ENCODE measurements at regions of chr20 and their contacts with region 1.

Region 1: DNA sequence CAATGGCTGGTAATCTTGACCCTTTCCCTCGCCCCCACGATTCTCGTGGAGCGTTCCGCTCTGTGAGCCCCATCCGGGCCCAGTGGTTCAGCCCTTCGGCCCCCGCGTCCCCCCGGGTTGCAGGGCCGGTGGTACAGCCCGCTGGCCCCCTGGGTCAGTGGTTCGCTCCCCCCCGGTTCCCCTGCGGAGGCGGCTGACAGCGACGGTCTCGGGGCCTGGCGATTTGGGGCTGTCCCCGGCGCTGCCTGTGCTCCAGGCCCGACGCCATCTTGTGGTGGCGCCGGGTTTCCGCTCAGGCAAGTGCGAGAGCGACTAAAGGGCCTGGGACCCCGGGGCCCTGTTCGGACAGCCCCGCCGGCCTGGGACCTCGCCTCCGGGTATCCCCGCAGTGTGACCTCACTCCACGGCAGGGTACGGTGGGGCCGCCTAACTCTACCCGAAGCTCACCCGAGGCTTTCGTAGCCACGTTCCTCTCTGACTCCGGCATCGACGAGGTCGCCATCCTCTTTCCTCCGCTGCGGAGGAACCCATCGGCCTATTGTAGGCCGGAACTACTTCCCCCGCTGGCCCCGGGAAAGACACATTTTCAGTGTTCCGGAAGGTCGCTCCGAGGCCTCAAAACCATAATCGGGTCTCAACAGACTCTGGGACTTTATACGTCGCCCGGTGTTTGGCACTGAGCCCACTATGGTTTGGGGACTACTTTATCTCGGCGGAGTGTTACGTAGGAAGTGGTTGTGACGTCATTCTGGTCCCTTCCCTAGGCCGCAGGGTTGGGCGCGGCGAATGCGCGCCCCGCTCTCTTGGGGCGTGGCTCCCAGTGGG is at the start of gene ZNF335:
- DNase-seq: peak; percentile 94
- H3K4me3 Mint-ChIP-seq: peak within 1 kb of the TSS; percentile 89
- H3K27ac Mint-ChIP-seq: peak within 1 kb of the TSS; percentile 100
- H3K4me1 Mint-ChIP-seq: peaks cover 23% of the 10 kb centered on the region
- H3K27me3 Mint-ChIP-seq: no peaks in the 10 kb centered on the region
- total RNA-seq, gene ZNF335: 38.3 and 40.9 TPM in 2 replicates

Region 2: DNA sequence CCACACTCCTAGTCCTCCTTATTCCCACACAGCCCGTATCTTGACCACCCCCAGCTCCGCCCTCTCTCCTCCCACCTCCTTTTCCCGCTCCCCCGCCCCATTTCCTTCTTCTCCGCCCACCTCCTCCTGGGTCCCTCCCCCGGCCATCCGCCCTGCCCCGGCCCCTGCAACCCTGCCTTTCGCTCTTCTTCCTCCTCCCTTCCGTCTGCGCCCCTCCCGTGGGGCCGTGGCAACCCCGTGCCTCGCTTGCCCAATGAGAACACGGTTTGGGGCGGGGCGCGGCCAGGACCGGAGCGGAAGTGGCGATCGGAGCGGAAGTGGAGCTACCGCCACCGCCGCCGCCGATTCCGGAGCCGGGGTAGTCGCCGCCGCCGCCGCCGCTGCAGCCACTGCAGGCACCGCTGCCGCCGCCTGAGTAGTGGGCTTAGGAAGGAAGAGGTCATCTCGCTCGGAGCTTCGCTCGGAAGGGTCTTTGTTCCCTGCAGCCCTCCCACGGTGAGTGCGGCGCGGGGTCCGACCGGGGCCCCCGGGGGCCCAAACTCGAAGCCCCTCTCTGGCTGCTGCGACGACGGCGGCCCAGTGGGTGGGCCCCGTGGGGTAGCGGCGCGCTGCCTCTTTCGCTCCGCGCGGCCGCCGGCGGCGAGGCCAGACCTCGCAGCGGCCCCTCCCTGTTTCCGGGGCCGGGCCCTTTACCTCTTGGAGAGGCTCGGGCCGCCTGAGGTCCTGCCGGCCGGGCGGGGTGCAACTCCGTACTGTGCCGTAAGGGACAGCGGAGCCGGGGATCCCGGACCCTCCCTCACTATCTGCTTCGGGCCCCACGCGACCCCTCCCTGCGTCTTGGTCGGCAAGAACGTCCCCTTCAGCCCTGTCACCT is 1086.3 kb before region 1 on chr20 and contains the start of gene YWHAB:
- intact Hi-C with region 1: loop called (anchors 5 kb)
- DNase-seq: peak; percentile 97
- H3K4me3 Mint-ChIP-seq: peak within 1 kb of the TSS; percentile 95
- H3K27ac Mint-ChIP-seq: peak within 1 kb of the TSS; percentile 94
- H3K4me1 Mint-ChIP-seq: peaks cover 54% of the 10 kb centered on the region
- H3K27me3 Mint-ChIP-seq: no peaks in the 10 kb centered on the region
- total RNA-seq, gene YWHAB: 230 and 246 TPM in 2 replicates

Region 3: DNA sequence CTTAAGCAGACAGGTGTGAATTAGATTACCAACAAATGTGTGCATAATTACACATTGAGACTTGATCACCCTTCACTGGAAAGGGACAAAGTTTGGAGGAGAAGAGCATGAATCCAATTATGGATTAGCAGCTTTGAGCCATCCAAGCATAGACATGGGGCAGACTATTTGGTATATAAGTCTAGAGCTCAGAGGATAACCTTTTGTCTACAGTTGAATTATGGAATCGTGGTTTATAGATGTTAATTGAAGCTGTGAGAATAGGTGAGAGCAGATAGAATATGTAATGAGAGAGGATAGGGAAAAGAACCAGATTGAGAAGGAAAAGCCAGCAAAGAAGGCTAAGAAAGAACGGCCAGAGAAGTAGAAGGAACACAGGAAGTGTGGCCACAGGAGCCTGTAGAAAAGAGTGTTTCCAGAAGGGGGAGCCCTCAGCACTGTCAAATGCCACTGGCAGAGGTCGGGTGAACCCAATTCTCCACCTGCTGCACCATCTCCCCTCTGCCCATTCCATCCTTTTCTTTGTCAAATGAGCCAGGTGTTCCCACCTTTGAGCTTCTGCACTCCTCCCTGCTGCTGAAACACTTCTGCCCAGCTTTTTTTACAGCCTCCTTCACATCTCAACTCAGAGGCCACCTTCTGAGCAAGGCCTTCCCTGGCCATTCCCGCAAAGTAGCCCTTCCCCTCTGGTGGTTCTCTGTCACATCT is 172.8 kb before region 1 on chr20:
- intact Hi-C with region 1: loop called (anchors 2 kb)
- DNase-seq: peak; percentile 64
- H3K4me3 Mint-ChIP-seq: no peak overlapping the region
- H3K27ac Mint-ChIP-seq: peak overlapping the region; percentile 4
- H3K4me1 Mint-ChIP-seq: peaks cover 20% of the 10 kb centered on the region
- H3K27me3 Mint-ChIP-seq: no peaks in the 10 kb centered on the region

Region 4: DNA sequence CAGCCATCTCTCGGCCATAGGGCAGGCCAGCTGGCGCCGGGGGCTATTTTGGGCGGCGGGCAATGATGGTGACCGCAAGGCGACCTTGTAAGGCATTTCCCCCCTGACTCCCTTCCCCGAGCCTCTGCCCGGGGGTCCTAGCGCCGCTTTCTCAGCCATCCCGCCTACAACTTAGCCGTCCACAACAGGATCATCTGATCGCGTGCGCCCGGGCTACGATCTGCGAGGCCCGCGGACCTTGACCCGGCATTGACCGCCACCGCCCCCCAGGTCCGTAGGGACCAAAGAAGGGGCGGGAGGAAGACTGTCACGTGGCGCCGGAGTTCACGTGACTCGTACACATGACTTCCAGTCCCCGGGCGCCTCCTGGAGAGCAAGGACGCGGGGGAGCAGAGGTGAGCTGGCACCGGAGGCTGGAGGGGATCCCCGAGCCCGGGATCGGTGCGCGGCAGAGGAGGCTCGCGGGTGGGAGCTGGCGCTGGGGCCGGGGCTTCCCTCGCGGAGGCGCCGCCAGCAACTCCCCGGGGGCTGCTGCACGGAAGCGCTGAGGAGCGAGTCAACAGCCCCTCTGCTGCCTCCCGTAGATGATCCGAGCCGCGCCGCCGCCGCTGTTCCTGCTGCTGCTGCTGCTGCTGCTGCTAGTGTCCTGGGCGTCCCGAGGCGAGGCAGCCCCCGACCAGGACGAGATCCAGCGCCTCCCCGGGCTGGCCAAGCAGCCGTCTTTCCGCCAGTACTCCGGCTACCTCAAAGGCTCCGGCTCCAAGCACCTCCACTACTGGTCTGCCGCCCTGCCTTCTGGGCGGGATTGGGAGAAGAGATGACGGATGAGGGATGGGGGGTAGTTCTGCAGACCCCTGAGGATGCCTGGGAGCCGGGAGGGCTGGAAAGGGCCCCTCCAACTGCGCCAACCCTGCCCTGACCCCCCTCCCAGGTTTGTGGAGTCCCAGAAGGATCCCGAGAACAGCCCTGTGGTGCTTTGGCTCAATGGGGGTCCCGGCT is 80.6 kb before region 1 on chr20 and contains the starts of genes CTSA and NEURL2:
- intact Hi-C with region 1: loop called (anchors 2 kb)
- DNase-seq: peak; percentile 80
- H3K4me3 Mint-ChIP-seq: peak within 1 kb of the TSS; percentile 91
- H3K27ac Mint-ChIP-seq: peak within 1 kb of the TSS; percentile 85
- H3K4me1 Mint-ChIP-seq: peaks cover 14% of the 10 kb centered on the region
- H3K27me3 Mint-ChIP-seq: peaks cover 1% of the 10 kb centered on the region
- total RNA-seq, gene CTSA: 43.0 and 46.9 TPM in 2 replicates
- total RNA-seq, gene NEURL2: 1.9 and 3.4 TPM in 2 replicates

Region 5: GRCh38 chr20:45987108-45987780 is 15.4 kb after region 1 on chr20:
- intact Hi-C with region 1: loop called (anchors 1 kb)
- DNase-seq: peak; percentile 69
- H3K4me3 Mint-ChIP-seq: no peak overlapping the region
- H3K27ac Mint-ChIP-seq: no peak overlapping the region
- H3K4me1 Mint-ChIP-seq: peaks cover 13% of the 10 kb centered on the region
- H3K27me3 Mint-ChIP-seq: peaks cover 34% of the 10 kb centered on the region

Region 6: GRCh38 chr20:46363800-46364634 is 392.1 kb after region 1 on chr20:
- intact Hi-C with region 1: loop called (anchors 1 kb)
- DNase-seq: peak; percentile 82
- H3K4me3 Mint-ChIP-seq: peak overlapping the region; percentile 93
- H3K27ac Mint-ChIP-seq: peak overlapping the region; percentile 82
- H3K4me1 Mint-ChIP-seq: peaks cover 66% of the 10 kb centered on the region
- H3K27me3 Mint-ChIP-seq: no peaks in the 10 kb centered on the region

Region 7: DNA sequence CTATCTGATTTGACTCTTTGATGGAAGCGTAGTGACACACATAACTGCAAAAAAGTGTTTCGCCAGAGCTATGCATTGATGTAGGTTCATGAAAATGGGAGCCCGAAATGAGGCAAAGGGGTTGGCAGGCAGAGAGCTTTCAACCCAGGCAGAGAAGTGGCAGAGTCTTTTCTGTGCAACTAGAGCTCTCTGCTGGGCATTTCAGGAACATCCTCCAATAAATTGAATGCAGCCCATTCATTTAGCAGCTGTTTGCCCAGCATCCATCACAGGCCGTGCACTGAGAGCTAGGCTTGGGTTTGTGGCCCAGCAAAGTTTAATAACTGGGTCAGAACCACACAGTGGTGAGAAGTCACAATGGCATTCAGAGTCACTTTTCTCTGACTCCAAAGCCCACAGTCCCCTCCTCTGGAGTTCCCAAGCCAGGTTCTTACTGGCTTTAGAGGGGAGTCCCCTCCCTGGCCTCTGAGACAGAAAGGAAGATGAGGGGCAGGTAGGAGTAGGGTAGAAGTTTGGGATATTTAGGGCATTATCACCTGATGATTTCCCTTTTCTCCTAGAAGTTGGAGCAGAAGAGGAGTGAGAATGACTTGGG is 466.4 kb after region 1 on chr20:
- intact Hi-C with region 1: no loop called
- DNase-seq: no peak
- H3K4me3 Mint-ChIP-seq: no peak overlapping the region
- H3K27ac Mint-ChIP-seq: no peak overlapping the region
- H3K4me1 Mint-ChIP-seq: no peaks in the 10 kb centered on the region
- H3K27me3 Mint-ChIP-seq: peaks cover 27% of the 10 kb centered on the region